GM23248 (cell line): ENCODE measurements at regions of chr1 and their contacts with region 1.

Region 1: DNA sequence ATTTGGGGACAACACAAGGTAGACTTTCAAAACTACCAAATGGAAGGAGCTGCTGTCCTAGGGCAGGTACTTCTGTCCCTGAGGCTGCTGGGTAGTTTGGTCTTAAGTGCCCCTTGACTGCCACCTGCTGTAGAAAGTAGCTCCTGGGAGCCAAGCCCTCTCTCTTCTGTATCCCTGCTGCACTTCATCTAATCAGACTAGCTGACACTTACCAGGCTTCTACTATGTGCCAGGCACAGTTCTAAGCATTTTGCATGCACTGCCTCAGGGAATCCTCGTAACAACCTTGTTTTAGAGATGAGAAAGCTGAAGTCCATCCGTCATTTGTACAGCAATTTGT is 15.9 kb upstream of the SRSF4 start:
- DNase-seq: peak; percentile 70
- H3K4me3 ChIP-seq: no peak overlapping the region
- H3K27ac ChIP-seq: peak overlapping the region; percentile 90
- H3K4me1 ChIP-seq: peaks cover 30% of the 10 kb centered on the region
- H3K27me3 ChIP-seq: no peaks in the 10 kb centered on the region

Region 2: DNA sequence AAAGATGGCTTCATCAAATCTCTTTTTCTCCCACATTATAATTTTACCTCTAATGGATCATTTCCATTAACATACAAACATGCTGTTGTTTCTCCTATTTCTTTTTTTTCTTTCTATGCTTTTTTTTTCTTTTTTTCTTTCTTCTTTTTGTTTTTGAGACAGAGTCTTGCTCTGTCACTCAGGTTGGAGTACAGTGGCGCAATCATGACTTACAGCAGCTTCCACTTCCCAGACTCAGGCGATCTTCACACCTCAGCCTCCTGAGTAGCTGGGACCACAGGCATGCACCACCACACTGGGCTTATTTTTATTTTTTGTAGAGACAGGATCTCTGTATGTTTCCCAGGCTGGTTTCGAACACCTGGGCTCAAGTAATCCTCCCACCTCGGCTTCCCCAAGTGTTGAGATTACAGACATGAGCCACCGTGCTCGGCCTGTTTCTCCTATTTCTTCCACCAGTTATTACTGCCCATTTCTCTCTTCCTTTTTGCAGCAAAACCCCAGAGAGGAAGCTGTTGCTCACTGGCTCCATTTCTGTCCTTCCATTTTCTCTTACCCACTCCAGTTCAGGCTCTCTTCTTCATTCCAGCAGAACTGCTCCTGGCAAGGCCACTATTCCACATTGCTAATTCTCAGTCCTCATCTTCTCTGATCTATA is 417.7 kb before region 1 on chr1:
- in situ Hi-C with region 1: loop called (anchors 10 kb)
- DNase-seq: no peak
- H3K4me3 ChIP-seq: no peak overlapping the region
- H3K27ac ChIP-seq: no peak overlapping the region
- H3K4me1 ChIP-seq: no peaks in the 10 kb centered on the region
- H3K27me3 ChIP-seq: no peaks in the 10 kb centered on the region

Region 3: GRCh38 chr1:28886731-28887418 is 310.7 kb before region 1 on chr1:
- in situ Hi-C with region 1: loop called (anchors 10 kb)
- DNase-seq: peak; percentile 71
- H3K4me3 ChIP-seq: peak overlapping the region; percentile 76
- H3K27ac ChIP-seq: no peak overlapping the region
- H3K4me1 ChIP-seq: peaks cover 5% of the 10 kb centered on the region; the same call in 1 of the 2 replicates
- H3K27me3 ChIP-seq: no peaks in the 10 kb centered on the region

Region 4: GRCh38 chr1:29043274-29043965 is 154.1 kb before region 1 on chr1:
- in situ Hi-C with region 1: loop called (anchors 10 kb)
- DNase-seq: no peak
- H3K4me3 ChIP-seq: no peak overlapping the region
- H3K27ac ChIP-seq: no peak overlapping the region
- H3K4me1 ChIP-seq: no peaks in the 10 kb centered on the region
- H3K27me3 ChIP-seq: no peaks in the 10 kb centered on the region